GM12878 (cell line): ENCODE measurements at regions of chr13 and their contacts with region 1.

Region 1: GRCh38 chr13:78978381-78978998 is 319.5 kb upstream of the OBI1 start:
- DNase-seq: peak; percentile 24
- ATAC-seq: peak; percentile 92
- H3K4me3 ChIP-seq: no peak overlapping the region
- H3K27ac ChIP-seq: no peak overlapping the region
- H3K4me1 ChIP-seq: no peaks in the 10 kb centered on the region
- H3K27me3 ChIP-seq: no peaks in the 10 kb centered on the region; a peak in 1 of 4 replicates
- CTCF ChIP-seq: peak; percentile 66 to 77 (median 74); a peak in 5 of 6 replicates
- EP300 ChIP-seq: no peak
- POLR2A ChIP-seq: no peak
- RAD21 ChIP-seq: peak; percentile 83

Region 2: GRCh38 chr13:78137404-78138142 is 840.9 kb before region 1 on chr13:
- CTCF ChIA-PET with region 1: interaction called, 37 read pairs
- POLR2A ChIA-PET with region 1: no interaction called
- RAD21 ChIA-PET with region 1: interaction called, 31 read pairs
- SMC1A ChIA-PET with region 1: interaction called, 25 read pairs
- in situ Hi-C with region 1: loop called (anchors 5 kb)
- intact Hi-C with region 1: loop called (anchors 1 kb)
- DNase-seq: peak; percentile 46
- ATAC-seq: peak; percentile 95
- H3K4me3 ChIP-seq: no peak overlapping the region
- H3K27ac ChIP-seq: no peak overlapping the region
- H3K4me1 ChIP-seq: no peaks in the 10 kb centered on the region
- H3K27me3 ChIP-seq: 0 out of 4 replicates have a peak, but pooled peaks cover 0 to under 1% of the 10 kb centered on the region in 2 experiments
- CTCF ChIP-seq: peak; percentile 67 to 74 (median 67)
- EP300 ChIP-seq: no peak
- POLR2A ChIP-seq: no peak
- RAD21 ChIP-seq: peak; percentile 82

Region 3: GRCh38 chr13:78317030-78317429 is 661.5 kb before region 1 on chr13:
- CTCF ChIA-PET with region 1: interaction called, 3 read pairs
- POLR2A ChIA-PET with region 1: no interaction called
- RAD21 ChIA-PET with region 1: interaction called, 3 read pairs
- SMC1A ChIA-PET with region 1: interaction called, 3 read pairs
- in situ Hi-C with region 1: no loop called
- intact Hi-C with region 1: loop called (anchors 2 kb)
- DNase-seq: no peak
- ATAC-seq: no peak
- H3K4me3 ChIP-seq: no peak overlapping the region
- H3K27ac ChIP-seq: no peak overlapping the region
- H3K4me1 ChIP-seq: no peaks in the 10 kb centered on the region
- H3K27me3 ChIP-seq: no peaks in the 10 kb centered on the region
- CTCF ChIP-seq: peak in 2 of 3 experiments; percentile 20 to 38; a peak in 3 of 6 replicates
- EP300 ChIP-seq: no peak
- POLR2A ChIP-seq: no peak
- RAD21 ChIP-seq: peak; percentile 74

Region 4: DNA sequence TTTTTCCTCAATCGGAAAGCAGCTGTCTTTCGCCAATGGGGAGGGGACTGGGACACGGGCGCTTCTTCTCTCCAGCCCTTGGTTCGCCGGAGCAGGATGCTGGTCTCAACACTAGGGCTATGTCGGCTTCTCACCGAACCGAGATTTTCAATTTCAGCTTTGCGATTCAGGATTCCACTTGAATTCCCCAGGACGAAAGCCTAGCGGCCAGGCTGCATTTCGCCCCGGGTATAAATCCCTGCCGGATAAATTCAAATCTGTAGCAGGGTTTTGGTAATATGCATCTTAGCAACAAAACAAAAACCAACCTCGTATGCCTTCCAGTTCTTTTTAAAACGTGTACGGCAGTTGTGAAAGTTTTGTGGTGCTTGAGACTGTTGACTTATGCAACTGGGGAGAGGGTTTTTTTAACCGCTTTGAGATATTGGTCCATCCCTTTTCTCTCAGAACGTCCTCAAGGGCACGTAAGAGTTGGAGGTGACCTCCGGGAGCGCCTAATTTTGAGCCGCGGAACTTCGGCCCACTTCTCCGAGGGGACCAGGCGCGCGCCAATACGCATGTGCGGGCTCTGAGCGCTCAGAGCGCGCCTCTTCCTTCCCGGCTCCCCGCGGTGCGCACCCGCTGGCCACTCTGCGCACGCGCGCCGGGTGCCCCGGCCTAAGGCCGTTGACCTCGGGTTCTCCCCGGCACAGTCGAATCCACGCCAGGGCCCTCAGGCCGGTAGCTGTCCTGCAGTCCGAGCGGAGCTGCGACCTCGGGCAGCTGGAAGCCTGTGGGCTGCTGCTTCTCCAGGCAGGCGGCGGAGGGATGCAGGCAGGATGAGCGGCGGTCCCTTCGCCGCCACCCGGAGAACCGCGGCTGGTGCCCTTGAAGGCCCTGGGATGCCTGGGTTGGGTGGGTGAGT is 382.7 kb before region 1 on chr13:
- CTCF ChIA-PET with region 1: no interaction called
- POLR2A ChIA-PET with region 1: no interaction called
- RAD21 ChIA-PET with region 1: no interaction called
- SMC1A ChIA-PET with region 1: no interaction called
- in situ Hi-C with region 1: no loop called
- intact Hi-C with region 1: loop called (anchors 10 kb)
- DNase-seq: no peak
- ATAC-seq: no peak
- H3K4me3 ChIP-seq: peak overlapping the region; percentile 43; the same call in 1 of the 2 replicates
- H3K27ac ChIP-seq: no peak overlapping the region
- H3K4me1 ChIP-seq: no peaks in the 10 kb centered on the region; the same call in 1 of the 2 replicates
- H3K27me3 ChIP-seq: peaks cover 12 to 32% of the 10 kb centered on the region in 2 experiments
- CTCF ChIP-seq: no peak
- EP300 ChIP-seq: no peak
- POLR2A ChIP-seq: no peak
- RAD21 ChIP-seq: no peak

Region 5: DNA sequence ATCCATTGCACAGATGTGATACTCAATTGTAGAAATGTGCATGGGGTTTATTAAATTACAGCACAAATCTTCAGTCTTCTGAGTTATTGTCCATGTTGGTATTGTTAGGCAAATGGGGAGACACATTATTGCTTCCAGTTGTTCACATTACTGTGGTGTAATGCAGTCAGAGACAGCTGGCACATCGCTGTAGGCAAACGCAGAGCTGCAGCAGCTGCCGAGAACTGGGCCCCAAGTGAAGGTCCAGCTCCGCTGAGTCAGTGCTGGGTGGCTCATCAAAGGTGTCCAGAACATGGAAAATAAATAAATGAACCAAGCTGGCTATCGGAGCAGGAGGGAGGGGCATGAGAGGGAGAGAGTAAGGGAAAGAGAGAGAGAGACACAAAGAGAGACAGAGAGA is 20.5 kb before region 1 on chr13:
- CTCF ChIA-PET with region 1: interaction called, 10 read pairs
- POLR2A ChIA-PET with region 1: no interaction called
- RAD21 ChIA-PET with region 1: no interaction called
- SMC1A ChIA-PET with region 1: interaction called, 11 read pairs
- in situ Hi-C with region 1: no loop called
- intact Hi-C with region 1: no loop called
- DNase-seq: no peak
- ATAC-seq: no peak
- H3K4me3 ChIP-seq: no peak overlapping the region
- H3K27ac ChIP-seq: no peak overlapping the region
- H3K4me1 ChIP-seq: no peaks in the 10 kb centered on the region
- H3K27me3 ChIP-seq: no peaks in the 10 kb centered on the region; a peak in 1 of 4 replicates
- CTCF ChIP-seq: no peak
- EP300 ChIP-seq: no peak
- POLR2A ChIP-seq: no peak
- RAD21 ChIP-seq: no peak

Region 6: GRCh38 chr13:79003989-79004898 is 25.8 kb after region 1 on chr13:
- CTCF ChIA-PET with region 1: interaction called, 12 read pairs
- POLR2A ChIA-PET with region 1: interaction called, 6 read pairs
- RAD21 ChIA-PET with region 1: interaction called, 31 read pairs
- SMC1A ChIA-PET with region 1: interaction called, 25 read pairs
- in situ Hi-C with region 1: no loop called
- intact Hi-C with region 1: no loop called
- DNase-seq: no peak
- ATAC-seq: peak; percentile 69
- H3K4me3 ChIP-seq: no peak overlapping the region
- H3K27ac ChIP-seq: no peak overlapping the region
- H3K4me1 ChIP-seq: no peaks in the 10 kb centered on the region
- H3K27me3 ChIP-seq: no peaks in the 10 kb centered on the region
- CTCF ChIP-seq: no peak
- EP300 ChIP-seq: peak; percentile 69 to 78; a peak in 2 of 4 replicates
- POLR2A ChIP-seq: no peak
- RAD21 ChIP-seq: no peak

Region 7: GRCh38 chr13:79056706-79057105 is 78.2 kb after region 1 on chr13:
- CTCF ChIA-PET with region 1: interaction called, 41 read pairs
- POLR2A ChIA-PET with region 1: interaction called, 3 read pairs
- RAD21 ChIA-PET with region 1: interaction called, 39 read pairs
- SMC1A ChIA-PET with region 1: interaction called, 40 read pairs
- in situ Hi-C with region 1: no loop called
- intact Hi-C with region 1: loop called (anchors 2 kb)
- DNase-seq: no peak
- ATAC-seq: peak; percentile 71
- H3K4me3 ChIP-seq: no peak overlapping the region
- H3K27ac ChIP-seq: no peak overlapping the region
- H3K4me1 ChIP-seq: no peaks in the 10 kb centered on the region
- H3K27me3 ChIP-seq: no peaks in the 10 kb centered on the region
- CTCF ChIP-seq: peak; percentile 18 to 58 (median 42); a peak in 3 of 6 replicates
- EP300 ChIP-seq: no peak
- POLR2A ChIP-seq: no peak
- RAD21 ChIP-seq: peak; percentile 15; the same call in 1 of the 2 replicates